ENCODE measurements at regions of chr11 and their contacts with region 1.

Region 1: GRCh38 chr11:43164826-43165225 is 147.0 kb upstream of the API5 start:
- DNase-seq: no peak
- ATAC-seq: no peak
- H3K4me3 ChIP-seq: no peak overlapping the region
- H3K27ac ChIP-seq: no peak overlapping the region
- H3K4me1 ChIP-seq: no peaks in the 10 kb centered on the region
- H3K27me3 ChIP-seq: no peaks in the 10 kb centered on the region
- CTCF ChIP-seq: no peak
- POLR2A ChIP-seq: no peak

Region 2: DNA sequence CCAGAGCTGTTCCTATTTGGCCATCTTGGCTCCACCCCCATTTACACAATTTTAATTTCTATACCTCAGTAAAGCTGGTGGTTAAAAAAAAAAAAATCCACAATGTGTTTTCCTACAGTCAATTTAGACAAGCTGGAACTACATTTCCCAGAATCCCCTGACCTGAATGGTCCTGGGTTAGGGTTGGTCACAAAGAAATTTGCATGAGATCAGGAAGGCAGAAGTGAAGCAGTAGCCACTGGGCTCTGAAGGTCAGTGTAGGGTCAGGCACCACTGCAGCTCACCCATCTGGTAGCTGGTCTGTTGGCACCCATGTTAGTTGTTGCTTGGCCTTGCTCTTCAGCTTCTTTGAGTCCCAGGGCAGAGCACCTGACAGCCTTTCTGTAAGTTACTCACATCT is 63.7 kb before region 1 on chr11:
- intact Hi-C with region 1: loop called in 1 of 10 experiments (anchors 10 kb)
- DNase-seq: no peak
- ATAC-seq: no peak
- H3K4me3 ChIP-seq: no peak overlapping the region
- H3K27ac ChIP-seq: no peak overlapping the region
- H3K4me1 ChIP-seq: no peaks in the 10 kb centered on the region
- H3K27me3 ChIP-seq: no peaks in the 10 kb centered on the region
- CTCF ChIP-seq: no peak
- POLR2A ChIP-seq: no peak

Measured in heart left ventricle (tissue), 16 donors.